Prostate gland (tissue), 2 donors: ENCODE measurements at regions of chr7 and their contacts with region 1.

Region 1: DNA sequence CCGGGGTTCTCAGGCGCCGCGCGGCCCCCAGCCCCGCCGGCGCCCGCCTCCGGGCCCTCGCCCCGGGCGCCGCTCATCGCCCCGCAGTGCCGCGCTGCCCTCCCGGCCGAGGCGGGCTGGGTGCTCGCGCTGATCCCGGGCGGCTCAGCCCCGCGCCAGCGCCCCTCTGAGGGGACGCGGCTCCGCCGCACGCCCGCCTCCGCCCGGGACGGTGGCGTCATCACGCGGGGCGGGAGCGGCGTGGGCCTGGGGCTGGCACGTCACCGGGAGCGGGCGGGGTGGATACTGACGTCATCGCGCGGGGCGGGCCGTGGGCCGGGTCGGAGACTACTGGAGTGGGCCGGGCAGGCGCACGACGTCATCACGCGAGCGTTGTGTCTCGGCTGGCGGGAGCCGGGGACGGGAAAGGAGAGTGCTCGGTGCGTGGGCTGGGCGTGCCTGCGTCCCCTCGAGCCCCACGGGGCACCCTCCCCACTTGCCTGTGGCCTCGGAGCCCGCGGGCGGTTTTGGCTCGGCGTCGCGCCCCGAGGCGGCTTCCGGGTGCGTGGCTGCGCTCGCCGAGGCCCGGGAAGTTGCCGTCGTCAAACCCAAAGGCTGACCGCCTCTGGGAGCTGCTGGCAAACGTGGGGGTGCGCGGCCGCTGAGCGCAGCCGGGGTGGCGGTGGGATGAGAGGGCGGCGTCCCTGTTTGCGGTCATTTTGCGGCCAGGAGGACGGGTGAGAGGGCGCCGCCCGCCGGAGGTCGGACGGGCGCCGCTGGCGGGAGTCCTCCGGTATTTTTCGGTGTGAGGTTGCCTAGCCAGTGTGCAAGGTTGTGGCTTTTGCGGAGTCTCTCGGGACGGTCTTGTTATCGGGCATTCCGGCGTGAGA is at the start of gene ESYT2:
- DNase-seq: peak; percentile 98
- H3K4me3 ChIP-seq: peak within 1 kb of the TSS; percentile 81 to 85
- H3K27ac ChIP-seq: peak within 1 kb of the TSS; percentile 99
- H3K4me1 ChIP-seq: no peaks in the 10 kb centered on the region
- H3K27me3 ChIP-seq: no peaks in the 10 kb centered on the region
- CTCF ChIP-seq: peak in 3 of 4 experiments; percentile 5 to 25 (median 16)
- POLR2A ChIP-seq: peak; percentile 100
- total RNA-seq, gene ESYT2: 60.8 to 75.1 TPM

Region 2: GRCh38 chr7:158704704-158705468 is 124.7 kb before region 1 on chr7 and contains the start of gene NCAPG2:
- intact Hi-C with region 1: loop called (anchors 10 kb)
- DNase-seq: peak; percentile 97
- H3K4me3 ChIP-seq: peak within 1 kb of the TSS; percentile 81 to 91
- H3K27ac ChIP-seq: peak within 1 kb of the TSS; percentile 86 to 91
- H3K4me1 ChIP-seq: no peaks in the 10 kb centered on the region
- H3K27me3 ChIP-seq: no peaks in the 10 kb centered on the region
- CTCF ChIP-seq: peak; percentile 30 to 73 (median 52)
- POLR2A ChIP-seq: peak; percentile 99
- total RNA-seq, gene NCAPG2: 7.9 to 11.9 TPM

Region 3: DNA sequence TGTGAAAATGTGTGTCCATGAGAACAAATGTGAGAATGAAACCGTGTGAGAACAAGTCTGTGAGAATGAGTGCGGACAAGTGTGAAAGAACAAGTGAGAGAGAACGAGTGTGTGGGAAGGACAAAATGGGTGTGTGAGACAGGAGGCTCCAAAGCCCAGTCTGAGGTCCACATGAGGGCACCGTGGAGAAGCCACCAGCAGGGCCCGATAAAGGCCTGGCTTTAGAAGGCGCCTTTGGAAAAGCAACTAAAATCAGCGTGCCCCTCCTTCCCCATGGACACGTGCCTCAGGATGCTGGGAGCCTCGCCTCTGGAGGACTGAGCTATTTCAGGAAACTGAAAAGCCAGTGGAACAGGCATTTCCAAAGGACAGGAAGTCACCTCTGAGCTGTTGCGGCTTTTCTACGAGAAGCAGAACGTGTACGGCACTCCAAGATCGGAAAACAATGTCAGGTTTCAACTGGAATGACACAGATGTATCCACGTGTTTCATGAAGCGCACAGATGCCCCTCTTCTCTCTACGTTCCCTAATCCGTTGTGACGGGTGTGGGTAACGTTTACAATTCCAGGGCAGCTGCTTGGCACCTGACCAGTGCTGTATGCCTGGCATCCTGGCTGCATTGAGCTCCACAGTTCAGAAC is 46.7 kb before region 1 on chr7:
- intact Hi-C with region 1: loop called (anchors 2 kb)
- DNase-seq: no peak
- H3K4me3 ChIP-seq: no peak overlapping the region
- H3K27ac ChIP-seq: peak overlapping the region; percentile 35 to 47
- H3K4me1 ChIP-seq: peaks cover 10% of the 10 kb centered on the region
- H3K27me3 ChIP-seq: no peaks in the 10 kb centered on the region
- CTCF ChIP-seq: peak in 2 of 4 experiments; percentile 37 to 43
- POLR2A ChIP-seq: no peak

Region 4: DNA sequence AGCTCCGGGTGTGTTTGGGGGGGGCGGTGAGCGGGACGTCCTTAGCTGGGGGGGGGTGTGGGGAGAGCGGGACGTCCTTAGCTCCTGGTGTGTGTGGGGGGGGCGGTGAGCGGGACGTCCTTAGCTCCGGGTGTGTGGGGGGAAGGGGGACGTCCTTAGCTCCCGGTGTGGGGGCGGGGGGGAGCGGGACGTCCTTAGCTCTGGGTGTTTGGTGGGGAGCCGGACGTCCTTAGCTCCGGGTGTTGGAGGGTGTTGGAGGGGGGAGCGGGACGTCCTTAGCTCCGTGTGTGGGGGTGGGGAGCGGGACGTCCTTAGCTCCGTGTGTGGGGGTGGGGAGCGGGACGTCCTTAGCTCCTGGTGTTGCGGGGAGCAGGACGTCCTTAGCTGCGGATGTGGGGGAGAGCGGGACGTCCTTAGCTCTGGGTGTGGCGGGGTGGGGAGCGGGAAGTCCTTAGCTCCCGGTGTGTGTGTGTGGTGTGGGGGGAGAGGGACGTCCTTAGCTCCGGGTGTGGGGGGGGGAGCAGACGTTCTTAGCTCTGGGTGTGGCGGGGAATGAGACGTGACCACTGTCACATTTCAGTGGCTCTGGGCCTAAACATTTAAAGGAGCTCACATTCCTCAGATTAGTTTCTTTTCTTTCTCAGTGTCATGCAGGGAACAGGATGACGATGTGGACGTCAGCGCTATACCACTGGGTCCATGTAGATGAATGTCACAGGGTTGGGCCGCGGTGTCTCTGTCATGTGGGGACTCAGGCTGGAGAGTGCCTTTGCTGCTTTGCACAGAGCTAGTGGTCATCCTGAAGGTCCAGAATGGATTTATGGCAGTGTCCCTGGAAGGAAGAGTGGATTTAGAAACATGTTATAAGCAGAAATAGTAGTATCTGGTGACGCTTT is 34.3 kb after region 1 on chr7:
- intact Hi-C with region 1: loop called (anchors 1 kb)
- DNase-seq: peak; percentile 63
- H3K4me3 ChIP-seq: peak overlapping the region; percentile 44 to 54
- H3K27ac ChIP-seq: peak overlapping the region; percentile 79 to 85
- H3K4me1 ChIP-seq: no peaks in the 10 kb centered on the region
- H3K27me3 ChIP-seq: no peaks in the 10 kb centered on the region
- CTCF ChIP-seq: no peak
- POLR2A ChIP-seq: no peak